Mucosa of descending colon (tissue), 3 donors: ENCODE measurements at regions of chr7 and their contacts with region 1.

Region 1: GRCh38 chr7:132489776-132490237 is 86.5 kb downstream of the PLXNA4 start:
- DNase-seq: no peak
- ATAC-seq: no peak
- H3K4me3 ChIP-seq: no peak overlapping the region
- H3K4me1 ChIP-seq: peaks cover 5% of the 10 kb centered on the region
- CTCF ChIP-seq: no peak

Region 2: DNA sequence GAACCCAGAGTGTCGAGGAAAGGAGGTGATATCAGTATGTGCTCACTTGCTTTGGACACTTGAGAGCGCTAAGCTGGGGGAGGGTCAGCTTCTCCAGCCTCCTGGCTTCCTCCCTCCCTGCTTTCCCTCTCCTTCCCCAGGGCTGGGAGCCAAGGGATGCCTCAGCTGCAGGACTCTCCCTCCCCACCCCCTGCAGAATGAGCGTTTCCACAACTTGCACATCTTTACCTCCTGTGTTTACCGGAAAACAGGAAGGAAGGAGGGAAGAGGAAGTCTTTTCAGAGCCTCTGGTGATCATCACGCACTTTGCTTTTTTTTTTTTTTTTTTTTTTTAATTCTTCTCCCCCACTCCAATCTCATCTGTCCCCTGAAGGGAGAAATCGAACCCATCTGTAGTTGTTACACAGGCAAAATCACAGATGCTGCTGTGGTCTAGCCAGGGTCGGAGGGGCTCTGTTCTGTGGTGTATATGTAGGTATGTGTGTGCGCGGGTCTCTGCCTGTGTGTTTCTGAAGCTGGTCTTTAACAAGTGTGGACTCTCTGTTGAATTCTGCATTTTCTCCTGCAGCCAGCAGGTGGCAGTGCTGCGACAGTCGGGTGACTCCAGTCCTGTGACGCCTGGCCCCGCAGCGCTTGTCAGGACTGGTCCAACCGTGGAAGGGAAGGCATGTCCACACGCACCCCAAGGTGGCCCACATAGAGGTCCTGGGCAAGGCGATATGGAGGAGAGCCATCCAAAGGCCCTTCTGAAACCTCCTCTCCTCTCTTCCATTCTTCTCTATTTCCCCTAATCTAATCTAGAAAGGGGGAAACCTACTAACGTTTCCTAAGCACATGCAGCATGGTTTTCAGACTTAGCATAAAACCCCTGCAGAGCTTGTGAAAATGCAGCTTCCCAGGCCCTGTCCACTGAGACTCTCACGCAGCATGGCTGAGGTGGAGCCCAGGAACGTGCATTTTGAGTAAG is 171.2 kb before region 1 on chr7:
- intact Hi-C with region 1: loop called in 1 of 2 experiments (anchors 10 kb)
- DNase-seq: peak; percentile 74 to 89 (median 85)
- ATAC-seq: peak; percentile 95
- H3K4me3 ChIP-seq: no peak overlapping the region
- H3K4me1 ChIP-seq: peaks cover 11% of the 10 kb centered on the region
- CTCF ChIP-seq: peak; percentile 77

Region 3: DNA sequence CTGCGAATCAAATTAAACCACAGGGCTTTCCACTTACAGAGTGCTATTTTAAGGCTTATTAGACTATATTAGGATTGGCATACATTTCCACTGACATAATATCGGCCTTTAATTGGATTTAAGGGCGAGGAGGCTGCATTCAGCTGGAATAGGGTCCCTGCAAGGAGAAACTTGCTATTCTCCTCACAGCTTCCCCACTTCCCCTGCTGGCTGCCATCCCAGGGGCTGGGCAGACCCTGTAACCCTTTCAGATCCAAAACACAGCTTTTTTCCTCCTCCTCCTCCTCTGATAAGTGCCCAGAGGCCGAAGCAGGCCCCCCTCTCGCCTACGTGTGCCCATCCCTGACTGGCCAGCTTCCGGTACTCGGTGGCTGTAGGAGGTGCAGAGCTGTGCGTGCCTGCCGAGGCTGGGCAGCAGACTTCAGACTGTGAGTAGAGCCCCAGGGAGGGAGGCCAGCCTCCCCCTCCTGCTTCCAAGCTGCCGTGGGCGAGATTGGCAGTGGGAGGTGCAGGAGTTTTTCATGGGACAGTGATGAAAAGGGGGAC is 137.8 kb before region 1 on chr7:
- intact Hi-C with region 1: no loop called
- DNase-seq: no peak
- ATAC-seq: no peak
- H3K4me3 ChIP-seq: no peak overlapping the region
- H3K4me1 ChIP-seq: no peaks in the 10 kb centered on the region
- CTCF ChIP-seq: no peak

Region 4: DNA sequence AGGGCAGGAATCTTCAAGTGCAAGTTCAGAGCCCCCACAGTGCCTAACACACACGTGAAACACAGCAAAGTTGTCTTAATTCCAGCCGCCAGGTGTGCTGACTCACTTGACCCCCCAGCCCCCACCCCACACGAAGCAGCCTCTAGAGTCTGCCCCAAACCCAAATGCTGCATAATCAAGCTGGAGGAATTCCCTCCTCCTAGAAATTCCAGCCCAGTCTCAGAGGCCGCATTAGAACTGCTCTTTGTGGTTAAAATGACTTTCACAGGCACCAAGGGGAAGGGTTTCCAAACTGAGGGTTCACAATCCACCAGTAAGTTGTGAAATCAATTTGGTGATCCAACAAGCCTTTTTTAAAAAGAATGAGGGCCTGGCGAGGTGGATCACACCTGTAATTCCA is 153.5 kb after region 1 on chr7:
- intact Hi-C with region 1: no loop called
- DNase-seq: no peak
- ATAC-seq: no peak
- H3K4me3 ChIP-seq: no peak overlapping the region
- H3K4me1 ChIP-seq: no peaks in the 10 kb centered on the region
- CTCF ChIP-seq: no peak